Aorta (tissue), 5 donors: ENCODE measurements at regions of chr12 and their contacts with region 1.

Region 1: DNA sequence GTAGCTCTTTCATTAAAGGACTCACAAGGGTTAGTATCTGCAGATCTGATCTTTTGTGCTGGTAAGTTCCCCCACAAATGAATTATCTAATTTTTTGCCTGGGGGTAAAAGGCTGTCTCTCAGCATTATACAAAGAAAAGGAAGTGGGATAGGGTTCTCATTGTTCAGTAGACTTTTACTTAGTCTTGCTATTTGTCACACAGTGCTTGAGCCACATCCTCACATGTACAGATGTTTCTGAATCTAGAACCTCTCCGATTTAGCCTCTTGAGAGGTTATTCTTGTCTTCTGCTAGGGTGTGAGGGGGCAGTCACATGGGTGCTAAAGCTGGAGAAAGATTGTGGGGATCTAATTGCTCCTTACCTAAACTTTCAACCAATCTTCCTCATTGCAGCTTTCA is 93.0 kb downstream of the SLC41A2 start:
- DNase-seq: no peak
- ATAC-seq: no peak
- H3K4me3 ChIP-seq: no peak overlapping the region
- H3K27ac ChIP-seq: peak overlapping the region; percentile 28 to 79
- H3K4me1 ChIP-seq: peaks cover 6 to 10% of the 10 kb centered on the region in 2 donors
- H3K27me3 ChIP-seq: no peaks in the 10 kb centered on the region

Region 2: DNA sequence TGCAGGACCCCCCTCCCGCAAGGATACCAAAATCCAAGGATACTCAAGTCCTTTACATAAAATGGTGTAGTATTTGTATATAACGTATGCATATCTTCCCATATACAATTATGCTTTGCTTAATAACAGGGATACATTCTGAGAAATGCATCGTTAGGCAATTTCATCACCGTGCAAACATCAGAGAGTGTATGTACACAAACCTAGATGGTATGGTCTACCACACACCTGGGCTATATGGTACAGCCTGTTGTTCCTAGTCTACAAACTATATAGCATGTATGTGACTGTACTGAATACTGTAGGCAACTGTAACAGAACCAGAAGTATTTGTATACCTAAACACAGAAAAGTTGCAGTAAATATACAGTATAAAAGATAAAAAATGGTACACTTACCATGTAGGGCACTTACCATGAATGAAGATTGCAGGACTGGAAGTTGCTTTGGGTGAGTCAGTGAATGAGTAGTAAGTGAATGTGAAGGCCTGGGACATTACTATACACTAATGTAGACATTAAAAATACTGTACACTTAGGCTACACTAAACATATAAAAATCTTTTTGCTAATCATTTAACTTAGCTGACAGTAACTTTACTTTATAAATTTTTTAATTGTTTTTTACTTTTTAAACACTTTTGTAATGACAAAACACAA is 48.1 kb before region 1 on chr12:
- intact Hi-C with region 1: loop called in 1 of 2 experiments (anchors 10 kb)
- DNase-seq: no peak
- ATAC-seq: no peak
- H3K4me3 ChIP-seq: no peak overlapping the region
- H3K27ac ChIP-seq: no peak overlapping the region
- H3K4me1 ChIP-seq: no peaks in the 10 kb centered on the region
- H3K27me3 ChIP-seq: no peaks in the 10 kb centered on the region